Activated T-helper 1 cell treated with anti-CD3 and anti-CD28 coated beads, Interleukin-12 subunit alpha, Interleukin-12 subunit beta, Interleukin-2, Interleukin-4 antibody, amounts not matched to agents 30 ng/mL and 10 ng/mL and 1 ng/mL, durations not matched to agents 14 hours and 24 hours and 36 hours (primary cell): ENCODE measurements at regions of chr10 and their contacts with region 1.

Region 1: DNA sequence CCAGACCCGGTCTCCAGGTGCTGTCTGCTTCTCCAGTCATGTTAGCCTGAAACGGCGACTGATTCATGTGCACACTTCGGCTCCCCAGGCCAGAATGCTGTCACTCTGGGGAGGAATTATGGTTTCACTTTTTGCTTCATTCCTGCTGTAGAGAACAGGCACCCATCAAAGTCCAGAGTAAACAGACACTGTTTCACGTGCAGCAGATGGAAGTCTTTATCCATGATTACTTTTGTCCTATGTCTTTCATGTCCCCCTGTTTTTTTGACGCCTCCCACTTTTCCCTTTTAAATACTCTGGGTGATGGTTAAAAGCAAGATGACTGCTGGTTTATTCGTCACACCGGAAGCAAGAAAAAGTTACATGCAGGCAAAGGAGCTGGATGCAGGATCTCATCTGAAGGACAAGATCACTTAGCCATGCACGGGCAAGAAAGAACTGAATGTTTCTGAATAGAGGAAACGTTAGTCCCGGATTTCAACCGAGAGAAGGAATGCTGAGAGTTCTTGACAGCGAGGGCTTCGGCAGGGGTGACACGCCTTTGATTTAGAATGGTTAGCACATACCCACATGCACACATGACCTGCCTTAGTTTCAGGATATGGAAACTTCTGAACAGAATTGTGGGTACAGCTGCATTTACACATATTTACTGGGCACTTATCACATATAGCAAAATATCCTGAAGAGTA is 250.0 kb upstream of the KLF6 start:
- DNase-seq: peak; percentile 11
- H3K4me3 Mint-ChIP-seq: peak overlapping the region; percentile 61
- H3K27ac Mint-ChIP-seq: peak overlapping the region; percentile 66
- H3K4me1 Mint-ChIP-seq: peaks cover 36% of the 10 kb centered on the region
- H3K27me3 Mint-ChIP-seq: no peaks in the 10 kb centered on the region

Region 2: GRCh38 chr10:3197348-3198003 is 837.6 kb before region 1 on chr10:
- intact Hi-C with region 1: loop called (anchors 1 kb)
- DNase-seq: peak; percentile 76
- H3K4me3 Mint-ChIP-seq: peak overlapping the region; percentile 37
- H3K27ac Mint-ChIP-seq: peak overlapping the region; percentile 57
- H3K4me1 Mint-ChIP-seq: peaks cover 24% of the 10 kb centered on the region
- H3K27me3 Mint-ChIP-seq: peaks cover 82% of the 10 kb centered on the region

Region 3: GRCh38 chr10:3668276-3668965 is 366.6 kb before region 1 on chr10:
- intact Hi-C with region 1: loop called (anchors 1 kb)
- DNase-seq: peak; percentile 55
- H3K4me3 Mint-ChIP-seq: peak overlapping the region; percentile 82
- H3K27ac Mint-ChIP-seq: peak overlapping the region; percentile 89
- H3K4me1 Mint-ChIP-seq: peaks cover 44% of the 10 kb centered on the region
- H3K27me3 Mint-ChIP-seq: peaks cover 3% of the 10 kb centered on the region

Region 4: DNA sequence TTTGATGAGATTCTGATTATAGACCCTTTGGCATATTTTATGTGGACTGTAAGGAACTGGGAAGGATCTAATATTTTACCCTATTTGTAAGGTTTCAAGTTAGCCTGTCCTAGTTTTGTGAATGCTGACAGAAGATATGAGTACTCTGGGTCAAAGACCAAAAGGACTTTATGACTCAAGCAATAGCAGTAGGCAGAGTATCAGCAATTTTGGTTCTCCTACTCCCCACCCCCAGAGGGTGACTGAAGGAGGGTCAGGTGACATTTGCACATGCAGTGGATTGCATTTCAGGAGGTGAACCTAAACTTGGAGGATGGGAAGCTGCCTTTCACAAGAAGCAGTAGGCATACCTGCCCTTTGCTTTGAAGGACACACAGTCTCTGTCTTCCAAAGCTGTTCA is 166.0 kb before region 1 on chr10:
- intact Hi-C with region 1: no loop called
- DNase-seq: no peak
- H3K4me3 Mint-ChIP-seq: no peak overlapping the region
- H3K27ac Mint-ChIP-seq: peak overlapping the region; percentile 77
- H3K4me1 Mint-ChIP-seq: peaks cover 84% of the 10 kb centered on the region
- H3K27me3 Mint-ChIP-seq: no peaks in the 10 kb centered on the region

Region 5: GRCh38 chr10:3887885-3888476 is 147.1 kb before region 1 on chr10:
- intact Hi-C with region 1: loop called (anchors 2 kb)
- DNase-seq: peak; percentile 48
- H3K4me3 Mint-ChIP-seq: peak overlapping the region; percentile 20
- H3K27ac Mint-ChIP-seq: peak overlapping the region; percentile 76
- H3K4me1 Mint-ChIP-seq: peaks cover 38% of the 10 kb centered on the region
- H3K27me3 Mint-ChIP-seq: no peaks in the 10 kb centered on the region

Region 6: GRCh38 chr10:4013651-4014121 is 21.4 kb before region 1 on chr10:
- intact Hi-C with region 1: loop called (anchors 2 kb)
- DNase-seq: peak; percentile 22
- H3K4me3 Mint-ChIP-seq: no peak overlapping the region
- H3K27ac Mint-ChIP-seq: no peak overlapping the region
- H3K4me1 Mint-ChIP-seq: peaks cover 21% of the 10 kb centered on the region
- H3K27me3 Mint-ChIP-seq: no peaks in the 10 kb centered on the region

Region 7: GRCh38 chr10:4241724-4242345 is 206.8 kb after region 1 on chr10:
- intact Hi-C with region 1: loop called (anchors 2 kb)
- DNase-seq: no peak
- H3K4me3 Mint-ChIP-seq: no peak overlapping the region
- H3K27ac Mint-ChIP-seq: no peak overlapping the region
- H3K4me1 Mint-ChIP-seq: peaks cover 43% of the 10 kb centered on the region
- H3K27me3 Mint-ChIP-seq: peaks cover 2% of the 10 kb centered on the region

Region 8: DNA sequence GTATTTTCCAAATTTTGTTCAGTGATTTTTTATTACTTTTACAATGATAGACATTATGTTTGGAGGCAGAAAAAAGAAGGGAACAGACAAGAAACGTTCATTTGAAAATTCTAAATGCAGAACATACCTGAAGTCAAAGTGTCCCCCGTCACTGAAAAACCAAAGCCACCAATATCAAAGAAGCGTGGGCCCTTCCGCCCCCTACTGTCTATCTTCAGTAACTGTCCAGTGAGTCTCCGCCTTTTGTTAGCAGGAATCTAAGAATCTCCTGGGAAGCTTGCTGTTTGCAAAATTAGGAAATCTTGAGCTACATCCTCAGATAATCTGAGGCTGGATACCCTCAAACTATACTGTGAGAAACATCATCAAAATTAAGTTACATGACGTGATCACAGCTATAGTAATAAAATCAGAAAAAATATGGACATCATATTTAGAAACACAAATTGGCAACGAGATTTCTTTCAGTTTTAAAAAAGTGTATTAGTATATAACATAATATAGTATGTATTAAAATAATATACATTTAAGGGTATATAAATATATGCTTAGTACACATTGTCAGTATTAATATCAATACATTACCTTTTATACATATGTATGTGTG is 621.6 kb after region 1 on chr10:
- intact Hi-C with region 1: loop called (anchors 1 kb)
- DNase-seq: no peak
- H3K4me3 Mint-ChIP-seq: no peak overlapping the region
- H3K27ac Mint-ChIP-seq: no peak overlapping the region
- H3K4me1 Mint-ChIP-seq: peaks cover 10% of the 10 kb centered on the region
- H3K27me3 Mint-ChIP-seq: peaks cover 18% of the 10 kb centered on the region